Spleen (tissue), 13 donors: ENCODE measurements at regions of chr17 and their contacts with region 1.

Region 1: GRCh38 chr17:46841561-46842379 is 9.6 kb upstream of the WNT9B start:
- DNase-seq: no peak
- H3K4me3 ChIP-seq: peak overlapping the region in 3 of 8 donors; percentile 1 to 51 (median 16)
- H3K27ac ChIP-seq: no peak overlapping the region
- H3K4me1 ChIP-seq: peaks cover 0 to 11% (median 6%) of the 10 kb centered on the region in 6 donors
- H3K27me3 ChIP-seq: peaks cover 0 to 71% (median 17%) of the 10 kb centered on the region in 7 donors
- CTCF ChIP-seq: peak in 9 of 11 experiments; percentile 32 to 87 (median 79)
- POLR2A ChIP-seq: no peak

Region 2: DNA sequence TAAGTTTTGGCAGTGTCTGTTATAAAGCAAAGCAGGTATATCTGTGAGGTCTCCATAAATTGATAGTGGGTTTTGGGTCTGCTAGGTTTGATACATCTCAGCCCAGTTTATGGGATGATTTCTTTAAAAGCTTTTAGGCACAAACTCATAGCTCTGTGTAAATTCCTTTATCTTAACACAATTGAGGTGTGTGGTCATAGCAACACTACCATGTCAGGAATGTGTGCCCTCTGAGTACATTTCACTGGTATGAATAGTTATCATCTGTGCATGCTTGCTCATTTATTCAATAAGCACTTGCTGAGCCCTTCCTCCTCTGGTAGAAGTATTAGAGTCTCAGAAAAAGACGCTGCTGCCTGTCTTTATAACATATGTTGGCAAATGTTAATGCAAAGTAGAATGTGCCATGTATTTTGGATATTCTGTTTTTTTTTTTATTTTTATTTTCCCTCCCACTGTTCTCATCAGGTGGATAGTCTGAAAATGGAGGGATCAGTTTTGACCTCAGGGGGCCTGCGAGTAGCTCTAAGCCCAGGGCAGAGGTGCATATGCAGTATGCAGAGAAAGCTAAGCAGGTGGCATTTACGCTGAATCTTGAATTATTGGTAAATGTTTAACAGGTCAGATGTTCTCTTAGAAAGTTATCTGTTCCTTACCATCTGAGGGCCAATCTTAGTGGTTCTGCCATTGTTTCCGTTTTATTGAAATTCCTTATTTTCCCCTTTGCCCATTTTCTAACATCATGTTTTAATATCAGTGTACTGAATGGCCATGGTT is 114.0 kb before region 1 on chr17:
- intact Hi-C with region 1: no loop called
- DNase-seq: no peak
- H3K4me3 ChIP-seq: no peak overlapping the region
- H3K27ac ChIP-seq: no peak overlapping the region
- H3K4me1 ChIP-seq: no peaks in the 10 kb centered on the region
- H3K27me3 ChIP-seq: no peaks in the 10 kb centered on the region
- CTCF ChIP-seq: no peak
- POLR2A ChIP-seq: no peak

Region 3: GRCh38 chr17:46929413-46929812 is 87.6 kb after region 1 on chr17:
- intact Hi-C with region 1: no loop called
- DNase-seq: no peak
- H3K4me3 ChIP-seq: no peak overlapping the region
- H3K27ac ChIP-seq: peak overlapping the region in 1 of 8 donors; percentile 8
- H3K4me1 ChIP-seq: peaks cover 17 to 68% (median 56%) of the 10 kb centered on the region in 6 donors
- H3K27me3 ChIP-seq: no peaks in the 10 kb centered on the region
- CTCF ChIP-seq: no peak
- POLR2A ChIP-seq: no peak

Region 4: GRCh38 chr17:46940621-46941404 is 99.0 kb after region 1 on chr17:
- intact Hi-C with region 1: loop called (anchors 5 kb)
- DNase-seq: peak; percentile 85
- H3K4me3 ChIP-seq: no peak overlapping the region
- H3K27ac ChIP-seq: peak overlapping the region in 1 of 8 donors; percentile 21
- H3K4me1 ChIP-seq: peaks cover 12 to 43% (median 34%) of the 10 kb centered on the region in 6 donors
- H3K27me3 ChIP-seq: no peaks in the 10 kb centered on the region
- CTCF ChIP-seq: peak; percentile 31 to 83 (median 78)
- POLR2A ChIP-seq: no peak

Region 5: GRCh38 chr17:47004906-47005305 is 163.1 kb after region 1 on chr17:
- intact Hi-C with region 1: loop called (anchors 5 kb)
- DNase-seq: no peak
- H3K4me3 ChIP-seq: no peak overlapping the region
- H3K27ac ChIP-seq: no peak overlapping the region
- H3K4me1 ChIP-seq: peaks cover 0 to 15% (median 2%) of the 10 kb centered on the region in 6 donors
- H3K27me3 ChIP-seq: no peaks in the 10 kb centered on the region
- CTCF ChIP-seq: no peak
- POLR2A ChIP-seq: no peak